Gastrocnemius medialis (tissue), 4 donors: ENCODE measurements at regions of chrX and their contacts with region 1.

Region 1: DNA sequence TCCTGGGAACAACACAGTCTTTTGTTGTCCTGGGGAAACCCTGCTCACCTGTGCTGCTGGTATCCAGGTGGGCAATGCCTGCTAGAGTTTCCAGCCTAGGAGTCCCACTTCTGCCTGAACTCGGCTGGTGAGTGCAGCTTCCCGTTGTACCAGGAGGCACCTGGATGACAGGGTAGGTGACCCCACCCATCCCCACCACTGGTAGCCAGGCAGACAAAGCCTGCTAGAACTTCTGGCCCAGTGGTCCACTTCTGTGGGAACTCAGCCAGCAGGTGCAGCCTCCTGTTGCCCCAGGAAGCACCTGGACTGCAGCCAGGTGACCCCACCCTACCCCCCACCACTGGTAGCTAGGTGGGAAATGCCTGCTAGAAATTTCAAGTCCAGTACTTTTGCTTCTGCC is 9.7 kb upstream of the TCEAL2 start:
- DNase-seq: no peak
- ATAC-seq: no peak
- H3K4me3 ChIP-seq: no peak overlapping the region
- H3K27ac ChIP-seq: no peak overlapping the region
- H3K4me1 ChIP-seq: no peaks in the 10 kb centered on the region
- H3K27me3 ChIP-seq: peaks cover 0 to 4% (median 0%) of the 10 kb centered on the region in 3 donors
- CTCF ChIP-seq: no peak
- POLR2A ChIP-seq: no peak

Region 2: GRCh38 chrX:101999644-102000539 is 115.9 kb before region 1 on chrX:
- in situ Hi-C with region 1: loop called in 1 of 4 experiments (anchors 25 kb)
- intact Hi-C with region 1: no loop called
- DNase-seq: no peak
- ATAC-seq: no peak
- H3K4me3 ChIP-seq: no peak overlapping the region
- H3K27ac ChIP-seq: no peak overlapping the region
- H3K4me1 ChIP-seq: no peaks in the 10 kb centered on the region
- H3K27me3 ChIP-seq: no peaks in the 10 kb centered on the region
- CTCF ChIP-seq: no peak
- POLR2A ChIP-seq: no peak